Common myeloid progenitor, CD34-positive (primary cell): ENCODE measurements at regions of chr10 and their contacts with region 1.

Region 1: DNA sequence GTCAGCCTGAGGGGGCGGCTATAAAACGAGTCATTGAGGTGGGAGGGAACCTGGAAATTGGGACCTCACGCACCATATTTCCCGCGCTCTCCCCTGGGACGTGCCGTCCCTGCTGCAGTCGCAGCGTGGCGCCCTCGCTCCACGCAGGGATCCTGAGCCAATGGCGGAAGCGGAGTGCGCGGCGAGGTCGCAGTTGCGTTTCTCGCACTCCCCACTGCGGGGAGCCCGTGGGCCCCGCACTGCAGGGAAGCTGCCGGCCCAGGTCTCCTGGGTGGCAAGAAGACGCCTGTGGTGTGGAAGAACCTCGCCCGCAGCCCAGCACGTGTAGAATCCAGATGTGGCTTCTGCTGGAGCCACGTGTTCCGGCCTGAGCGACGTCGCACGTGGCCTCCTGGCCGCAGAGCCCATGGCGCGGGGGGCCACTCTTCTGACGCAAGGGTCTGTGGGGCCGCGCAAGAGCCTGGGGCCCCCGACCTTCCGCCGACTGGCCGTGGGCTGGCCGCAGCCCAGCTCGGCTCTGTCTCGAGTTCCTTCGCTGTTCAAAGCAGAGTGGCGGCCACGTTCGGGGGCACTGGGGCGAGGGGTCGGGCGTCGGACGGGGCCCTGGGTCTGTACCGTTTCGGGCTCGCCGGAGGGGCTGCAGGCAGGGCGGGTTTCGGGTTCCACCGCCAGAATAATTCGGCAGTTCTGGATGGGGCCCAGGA is 26.4 kb downstream of the HIF1AN start:
- DNase-seq: peak; percentile 87 to 93 (median 91)
- H3K4me3 ChIP-seq: peak overlapping the region in 3 of 7 experiments; percentile 8 to 50 (median 23)
- H3K27ac ChIP-seq: no peak overlapping the region
- H3K4me1 ChIP-seq: peaks cover 0 to 15% (median 14%) of the 10 kb centered on the region in 4 experiments
- H3K27me3 ChIP-seq: peaks cover 0 to 61% (median 32%) of the 10 kb centered on the region in 5 experiments

Region 2: GRCh38 chr10:100364735-100365391 is 197.3 kb before region 1 on chr10:
- CTCF ChIA-PET with region 1: no interaction called
- POLR2A ChIA-PET with region 1: no interaction called
- DNase-seq: peak; percentile 29 to 72 (median 63)
- H3K4me3 ChIP-seq: no peak overlapping the region
- H3K27ac ChIP-seq: no peak overlapping the region
- H3K4me1 ChIP-seq: peaks cover 3 to 23% (median 11%) of the 10 kb centered on the region in 4 experiments
- H3K27me3 ChIP-seq: no peaks in the 10 kb centered on the region

Region 3: GRCh38 chr10:100551196-100551595 is 11.0 kb before region 1 on chr10:
- CTCF ChIA-PET with region 1: interaction called, 23 read pairs
- POLR2A ChIA-PET with region 1: no interaction called
- DNase-seq: no peak
- H3K4me3 ChIP-seq: no peak overlapping the region
- H3K27ac ChIP-seq: no peak overlapping the region
- H3K4me1 ChIP-seq: no peaks in the 10 kb centered on the region
- H3K27me3 ChIP-seq: no peaks in the 10 kb centered on the region

Region 4: GRCh38 chr10:100687143-100688003 is 125.2 kb after region 1 on chr10:
- CTCF ChIA-PET with region 1: no interaction called
- POLR2A ChIA-PET with region 1: no interaction called
- DNase-seq: no peak
- H3K4me3 ChIP-seq: no peak overlapping the region
- H3K27ac ChIP-seq: no peak overlapping the region
- H3K4me1 ChIP-seq: no peaks in the 10 kb centered on the region
- H3K27me3 ChIP-seq: peaks cover 12 to 99% (median 52%) of the 10 kb centered on the region in 5 experiments

Region 5: DNA sequence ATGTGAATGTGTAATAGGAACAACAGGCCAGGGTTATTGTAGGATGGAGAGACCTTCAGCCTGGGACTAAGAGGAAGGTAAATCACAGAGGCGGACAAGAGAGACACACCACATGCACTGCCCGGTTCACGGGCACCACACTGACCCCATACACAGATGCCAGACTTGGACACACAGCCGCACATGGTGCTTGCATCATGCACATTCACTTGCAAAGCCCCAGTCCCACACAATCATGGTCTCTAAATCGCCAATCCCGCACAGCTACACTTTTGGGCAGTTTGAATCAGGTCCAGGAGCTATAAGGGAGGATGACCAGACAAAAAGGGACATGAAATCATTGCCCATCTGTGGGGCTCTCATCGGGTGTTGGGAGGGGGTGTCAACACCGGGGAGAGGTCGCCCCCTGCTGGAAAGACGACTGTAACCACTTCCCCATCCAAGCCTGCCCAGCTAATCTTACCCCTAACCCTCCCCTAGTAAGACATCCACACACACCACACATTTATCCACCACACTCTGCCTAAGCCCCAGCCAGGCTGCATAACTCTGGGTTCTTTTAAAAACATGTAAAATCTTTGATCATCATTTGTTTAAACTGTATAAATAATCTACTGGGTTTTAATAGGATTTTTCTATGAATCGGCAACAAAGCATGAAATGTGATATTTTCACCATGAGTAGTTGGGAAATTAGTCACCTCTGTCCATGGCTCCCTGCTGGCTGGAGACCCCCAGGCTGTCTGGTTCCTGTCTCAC is 310.1 kb after region 1 on chr10:
- CTCF ChIA-PET with region 1: interaction called, 68 read pairs
- POLR2A ChIA-PET with region 1: no interaction called
- DNase-seq: peak; percentile 44 to 72 (median 66)
- H3K4me3 ChIP-seq: no peak overlapping the region
- H3K27ac ChIP-seq: no peak overlapping the region
- H3K4me1 ChIP-seq: no peaks in the 10 kb centered on the region
- H3K27me3 ChIP-seq: peaks cover 0 to 26% (median 8%) of the 10 kb centered on the region in 5 experiments